Activated CD8-positive, alpha-beta T cell treated with anti-CD3 and anti-CD28 coated beads for 36 hours (primary cell): ENCODE measurements at regions of chr9 and their contacts with region 1.

Region 1: GRCh38 chr9:114958021-114958843 is 27.8 kb upstream of the TNFSF8 start:
- DNase-seq: peak; percentile 75
- ATAC-seq: peak; percentile 83
- H3K4me3 Mint-ChIP-seq: peak overlapping the region; percentile 70
- H3K27ac Mint-ChIP-seq: peak overlapping the region; percentile 99
- H3K4me1 Mint-ChIP-seq: peaks cover 57% of the 10 kb centered on the region
- H3K27me3 Mint-ChIP-seq: no peaks in the 10 kb centered on the region
- CTCF ChIP-seq: no peak

Region 2: DNA sequence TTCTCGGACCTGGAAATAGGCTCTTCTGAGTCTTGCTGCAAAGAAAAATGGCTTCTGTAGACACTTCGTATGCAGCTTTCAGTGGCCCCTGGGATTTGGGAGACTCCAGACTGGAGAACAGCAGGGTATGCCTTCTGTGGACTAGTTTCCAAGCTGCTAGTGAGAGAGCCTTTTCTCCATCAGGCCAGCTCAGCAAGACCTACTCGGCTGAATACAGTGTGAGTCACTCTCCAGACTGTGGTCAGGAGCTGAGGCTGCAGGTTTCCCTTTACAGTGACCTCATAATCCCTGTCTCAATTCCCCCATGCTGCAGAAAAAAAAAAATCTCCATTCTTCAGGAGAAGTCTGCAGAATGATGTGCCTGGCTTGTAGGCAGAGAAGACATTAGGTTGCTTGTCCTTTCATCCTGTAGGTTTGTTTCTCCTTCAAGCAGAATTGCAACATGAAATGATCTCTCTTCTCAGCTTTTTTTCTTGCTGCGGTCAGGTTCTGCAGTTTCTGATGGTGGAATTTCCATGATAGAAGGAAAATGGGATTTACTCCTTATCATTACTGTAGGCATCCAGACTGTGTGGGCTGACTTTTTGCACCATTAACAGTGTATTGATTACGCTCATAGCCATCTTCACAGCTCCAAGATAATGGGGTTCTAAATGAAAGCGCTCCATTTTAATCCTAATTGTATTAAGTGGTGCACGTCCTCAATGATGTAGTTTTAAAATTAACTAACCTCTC is 50.5 kb after region 1 on chr9:
- CTCF ChIA-PET with region 1: interaction called, 4 read pairs
- POLR2A ChIA-PET with region 1: interaction called, 3 read pairs
- intact Hi-C with region 1: loop called (anchors 5 kb)
- DNase-seq: peak; percentile 38
- ATAC-seq: peak; percentile 48
- H3K4me3 Mint-ChIP-seq: no peak overlapping the region
- H3K27ac Mint-ChIP-seq: no peak overlapping the region
- H3K4me1 Mint-ChIP-seq: peaks cover 63% of the 10 kb centered on the region
- H3K27me3 Mint-ChIP-seq: no peaks in the 10 kb centered on the region
- CTCF ChIP-seq: no peak